MCF 10A (cell line): ENCODE measurements at regions of chr17 and their contacts with region 1.

Region 1: GRCh38 chr17:69523244-69523861 is 108.9 kb downstream of the MAP2K6 start:
- DNase-seq: peak; percentile 72
- H3K4me3 Mint-ChIP-seq: no peak overlapping the region
- H3K27ac Mint-ChIP-seq: no peak overlapping the region
- H3K4me1 Mint-ChIP-seq: peaks cover 5% of the 10 kb centered on the region
- H3K27me3 Mint-ChIP-seq: no peaks in the 10 kb centered on the region
- CTCF ChIP-seq: peak; percentile 70

Region 2: DNA sequence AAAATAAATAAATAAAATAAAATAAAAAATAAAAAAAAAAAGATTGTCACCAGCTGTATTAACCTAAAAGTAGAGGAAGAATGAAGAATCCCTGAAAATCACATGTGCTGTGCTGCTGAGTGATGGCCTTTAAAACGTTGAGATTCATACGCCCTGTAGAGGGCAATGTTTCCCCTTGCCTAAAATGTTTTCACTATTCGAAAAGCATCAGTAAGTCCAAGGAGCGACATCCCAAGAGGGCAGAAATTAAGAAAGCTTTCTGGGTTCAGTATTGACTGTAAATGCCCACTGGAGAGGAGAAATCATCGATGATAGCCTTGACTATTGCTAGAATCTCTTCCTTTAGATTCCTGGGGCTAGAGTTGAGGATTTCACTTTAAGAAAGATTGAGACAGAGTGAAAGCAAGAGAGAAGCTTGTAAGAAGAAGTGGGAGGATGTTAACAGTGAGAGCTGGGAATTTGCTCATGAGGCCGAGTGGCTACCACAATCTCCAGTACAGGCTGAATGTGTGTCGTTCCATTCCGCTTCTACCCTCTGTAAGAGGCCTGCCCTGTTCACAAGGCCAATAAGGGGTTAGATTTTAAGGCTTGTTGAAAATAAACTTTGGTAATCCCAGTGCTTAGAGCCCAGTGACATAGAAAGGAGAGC is 751.4 kb before region 1 on chr17:
- CTCF ChIA-PET with region 1: interaction called, 3 read pairs
- POLR2A ChIA-PET with region 1: no interaction called
- intact Hi-C with region 1: loop called (anchors 2 kb)
- DNase-seq: peak; percentile 74
- H3K4me3 Mint-ChIP-seq: no peak overlapping the region
- H3K27ac Mint-ChIP-seq: no peak overlapping the region
- H3K4me1 Mint-ChIP-seq: peaks cover 6% of the 10 kb centered on the region
- H3K27me3 Mint-ChIP-seq: no peaks in the 10 kb centered on the region
- CTCF ChIP-seq: peak; percentile 61

Region 3: DNA sequence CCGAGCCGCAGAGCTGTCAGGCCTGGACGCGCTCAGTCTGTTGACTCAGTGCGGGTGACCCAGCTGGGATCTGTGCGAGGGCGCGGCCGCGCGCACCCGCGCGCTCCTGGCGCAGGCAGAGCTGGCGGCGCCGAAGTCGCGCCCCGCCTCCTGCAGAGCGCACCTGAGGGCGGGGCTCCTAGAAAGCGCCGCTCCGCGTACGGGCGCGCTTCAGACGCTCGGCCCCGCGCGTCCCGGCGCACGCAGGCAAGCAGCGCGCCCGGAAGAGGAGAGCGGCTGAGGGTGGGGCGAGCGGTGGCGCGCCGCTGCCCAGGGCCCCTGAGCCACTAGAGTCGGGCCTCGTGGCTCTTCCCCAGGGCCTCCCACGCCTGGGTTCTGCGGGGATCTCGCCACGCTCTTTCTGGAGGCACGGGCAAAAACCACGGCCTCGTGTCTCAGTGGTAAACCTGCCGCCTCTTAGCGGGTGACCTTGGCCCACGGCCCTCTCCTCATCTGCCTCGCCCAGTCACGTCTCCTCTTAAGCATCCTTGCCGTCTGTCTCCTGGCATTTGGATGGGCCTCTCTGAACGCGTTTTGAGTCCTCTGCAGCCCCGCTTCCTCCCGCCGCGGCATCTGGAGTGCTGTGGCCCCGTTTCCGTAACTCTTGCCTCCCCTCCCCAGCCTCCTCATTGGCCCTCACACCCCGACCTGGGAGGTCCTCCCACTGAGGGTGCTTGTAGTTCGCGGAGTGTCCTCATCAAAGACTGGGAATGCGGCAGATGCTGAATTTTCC is 196.1 kb before region 1 on chr17 and contains the start of gene ABCA5:
- CTCF ChIA-PET with region 1: interaction called, 107 read pairs
- POLR2A ChIA-PET with region 1: interaction called, 15 read pairs
- intact Hi-C with region 1: loop called (anchors 2 kb)
- DNase-seq: peak; percentile 93
- H3K4me3 Mint-ChIP-seq: peak within 1 kb of the TSS; percentile 99
- H3K27ac Mint-ChIP-seq: peak within 1 kb of the TSS; percentile 99
- H3K4me1 Mint-ChIP-seq: peaks cover 12% of the 10 kb centered on the region
- H3K27me3 Mint-ChIP-seq: no peaks in the 10 kb centered on the region
- CTCF ChIP-seq: no peak
- total RNA-seq, gene ABCA5: 7.6 and 9.6 TPM in 2 replicates

Region 4: DNA sequence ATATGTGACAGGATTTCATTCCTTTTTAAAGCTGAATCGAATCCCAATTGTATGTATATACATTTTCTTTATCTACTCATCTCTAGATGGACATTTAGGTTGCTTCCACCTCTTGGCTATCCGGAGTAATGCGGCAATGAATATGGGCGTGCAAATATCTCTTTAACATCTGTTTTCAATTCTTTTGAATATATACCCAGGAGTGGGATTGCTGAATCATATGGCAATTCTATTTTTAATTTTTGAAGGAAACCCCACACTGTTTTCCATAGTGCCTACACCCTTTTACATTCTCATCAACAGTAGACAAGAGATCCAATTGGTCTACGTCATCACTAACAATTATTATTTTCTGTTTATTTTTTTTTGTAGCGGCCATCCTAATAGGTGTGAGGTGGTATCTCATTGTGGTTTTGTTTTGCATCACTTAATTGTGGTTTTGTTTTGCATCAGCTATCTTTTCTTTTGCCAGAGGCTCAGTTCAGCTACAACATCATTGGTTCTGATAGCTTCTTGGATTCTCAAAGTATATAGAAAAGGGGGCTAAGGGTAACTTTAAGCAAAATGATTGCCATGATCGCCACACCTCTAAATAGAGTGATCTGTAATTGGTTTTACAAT is 134.4 kb before region 1 on chr17:
- CTCF ChIA-PET with region 1: interaction called, 4 read pairs
- POLR2A ChIA-PET with region 1: no interaction called
- intact Hi-C with region 1: loop called (anchors 1 kb)
- DNase-seq: no peak
- H3K4me3 Mint-ChIP-seq: no peak overlapping the region
- H3K27ac Mint-ChIP-seq: no peak overlapping the region
- H3K4me1 Mint-ChIP-seq: no peaks in the 10 kb centered on the region
- H3K27me3 Mint-ChIP-seq: peaks cover 12% of the 10 kb centered on the region
- CTCF ChIP-seq: no peak

Region 5: DNA sequence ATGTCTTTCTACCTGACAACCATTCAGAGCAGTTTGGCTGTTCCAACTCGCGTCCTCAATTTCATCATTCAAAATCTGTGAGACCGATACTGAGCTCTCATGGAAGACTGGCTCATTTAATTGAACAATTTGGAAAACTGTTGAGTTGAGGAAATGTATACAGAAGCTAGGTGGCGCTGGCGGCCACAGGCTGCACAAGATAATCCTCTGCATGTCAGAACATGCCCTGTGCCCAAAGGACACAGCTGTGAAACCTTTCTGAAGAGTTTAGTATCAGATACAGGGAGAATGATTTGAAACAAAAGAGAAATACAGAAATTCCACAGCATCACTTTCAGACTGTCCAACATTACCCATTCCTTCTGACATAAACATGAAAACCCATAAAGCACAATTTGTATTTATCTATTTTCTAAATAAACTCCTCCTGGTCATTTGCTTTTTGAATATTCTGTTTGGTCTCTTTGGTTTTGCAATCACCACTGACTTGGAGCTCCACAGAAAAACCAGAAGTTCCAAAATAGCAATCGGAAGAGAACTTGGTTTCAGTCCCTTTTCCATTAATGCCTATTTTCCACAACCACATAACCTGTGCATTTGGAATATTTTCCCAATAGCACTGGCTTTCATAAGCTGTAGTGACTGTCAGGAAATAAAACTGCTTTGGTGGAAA is 83.9 kb after region 1 on chr17:
- CTCF ChIA-PET with region 1: interaction called, 7 read pairs
- POLR2A ChIA-PET with region 1: no interaction called
- intact Hi-C with region 1: loop called (anchors 1 kb)
- DNase-seq: peak; percentile 84
- H3K4me3 Mint-ChIP-seq: peak overlapping the region; percentile 13
- H3K27ac Mint-ChIP-seq: peak overlapping the region; percentile 97
- H3K4me1 Mint-ChIP-seq: peaks cover 30% of the 10 kb centered on the region
- H3K27me3 Mint-ChIP-seq: no peaks in the 10 kb centered on the region
- CTCF ChIP-seq: peak; percentile 83

Region 6: DNA sequence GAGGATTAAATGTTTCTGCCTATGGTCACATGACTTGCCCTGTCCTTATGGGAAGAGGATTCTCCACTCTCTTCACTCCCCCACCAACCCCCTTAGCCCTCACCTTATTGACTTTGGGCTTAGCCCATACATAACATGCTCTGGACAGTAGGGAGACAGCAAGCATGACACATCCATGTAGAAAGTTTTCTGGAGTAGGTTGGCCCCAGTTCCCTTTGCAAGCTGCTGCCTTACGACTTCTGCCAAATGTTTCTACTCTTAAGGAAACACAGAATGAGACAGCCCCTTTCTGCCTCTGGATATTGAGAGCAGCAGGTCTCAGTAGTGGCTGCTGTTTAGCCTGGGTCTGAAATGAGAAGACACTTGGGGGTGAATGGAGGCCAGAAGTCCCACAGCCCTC is 173.3 kb after region 1 on chr17:
- CTCF ChIA-PET with region 1: no interaction called
- POLR2A ChIA-PET with region 1: no interaction called
- intact Hi-C with region 1: no loop called
- DNase-seq: no peak
- H3K4me3 Mint-ChIP-seq: no peak overlapping the region
- H3K27ac Mint-ChIP-seq: no peak overlapping the region
- H3K4me1 Mint-ChIP-seq: no peaks in the 10 kb centered on the region
- H3K27me3 Mint-ChIP-seq: no peaks in the 10 kb centered on the region
- CTCF ChIP-seq: no peak

Region 7: GRCh38 chr17:70622368-70623260 is 1099.3 kb after region 1 on chr17:
- CTCF ChIA-PET with region 1: interaction called, 22 read pairs
- POLR2A ChIA-PET with region 1: no interaction called
- intact Hi-C with region 1: loop called (anchors 1 kb)
- DNase-seq: peak; percentile 75
- H3K4me3 Mint-ChIP-seq: no peak overlapping the region
- H3K27ac Mint-ChIP-seq: no peak overlapping the region
- H3K4me1 Mint-ChIP-seq: peaks cover 6% of the 10 kb centered on the region
- H3K27me3 Mint-ChIP-seq: no peaks in the 10 kb centered on the region
- CTCF ChIP-seq: peak; percentile 68